Aorta (tissue), 5 donors: ENCODE measurements at regions of chr11 and their contacts with region 1.

Region 1: GRCh38 chr11:9170450-9170849 is 79.1 kb upstream of the SCUBE2 start:
- DNase-seq: no peak
- ATAC-seq: no peak
- H3K4me3 ChIP-seq: no peak overlapping the region
- H3K27ac ChIP-seq: no peak overlapping the region
- H3K4me1 ChIP-seq: no peaks in the 10 kb centered on the region
- H3K27me3 ChIP-seq: no peaks in the 10 kb centered on the region

Region 2: GRCh38 chr11:9015677-9016076 is 154.8 kb before region 1 on chr11:
- intact Hi-C with region 1: no loop called
- DNase-seq: peak in 1 of 2 donors; percentile 77
- ATAC-seq: peak; percentile 74
- H3K4me3 ChIP-seq: no peak overlapping the region
- H3K27ac ChIP-seq: no peak overlapping the region
- H3K4me1 ChIP-seq: no peaks in the 10 kb centered on the region
- H3K27me3 ChIP-seq: peaks cover 0 to 2% of the 10 kb centered on the region in 2 donors

Region 3: GRCh38 chr11:9231848-9232177 is 61.4 kb after region 1 on chr11:
- intact Hi-C with region 1: no loop called
- DNase-seq: no peak
- ATAC-seq: no peak
- H3K4me3 ChIP-seq: peak overlapping the region in 1 of 2 donors; percentile 24
- H3K27ac ChIP-seq: no peak overlapping the region
- H3K4me1 ChIP-seq: peaks cover 0 to 8% of the 10 kb centered on the region in 2 donors
- H3K27me3 ChIP-seq: no peaks in the 10 kb centered on the region

Region 4: GRCh38 chr11:9265211-9266131 is 95.0 kb after region 1 on chr11 and contains the start of gene DENND5A:
- intact Hi-C with region 1: loop called in 1 of 2 experiments (anchors 10 kb)
- DNase-seq: peak; percentile 91 to 96
- ATAC-seq: peak; percentile 94
- H3K4me3 ChIP-seq: peak within 1 kb of the TSS; percentile 76 to 100
- H3K27ac ChIP-seq: peak within 1 kb of the TSS; percentile 84 to 98
- H3K4me1 ChIP-seq: no peaks in the 10 kb centered on the region
- H3K27me3 ChIP-seq: no peaks in the 10 kb centered on the region
- total RNA-seq, gene DENND5A: 129 to 155 TPM